ENCODE measurements at regions of chr19 and their contacts with region 1.

Region 1: GRCh38 chr19:17496337-17496997 is 15.0 kb upstream of the PGLS start:
- DNase-seq: peak; percentile 90
- CTCF ChIP-seq: peak; percentile 96

Region 2: GRCh38 chr19:17460372-17461230 is 35.9 kb before region 1 on chr19 and contains the start of gene NXNL1:
- CTCF ChIA-PET with region 1: interaction called, 31 read pairs
- POLR2A ChIA-PET with region 1: no interaction called
- DNase-seq: no peak
- CTCF ChIP-seq: no peak

Region 3: DNA sequence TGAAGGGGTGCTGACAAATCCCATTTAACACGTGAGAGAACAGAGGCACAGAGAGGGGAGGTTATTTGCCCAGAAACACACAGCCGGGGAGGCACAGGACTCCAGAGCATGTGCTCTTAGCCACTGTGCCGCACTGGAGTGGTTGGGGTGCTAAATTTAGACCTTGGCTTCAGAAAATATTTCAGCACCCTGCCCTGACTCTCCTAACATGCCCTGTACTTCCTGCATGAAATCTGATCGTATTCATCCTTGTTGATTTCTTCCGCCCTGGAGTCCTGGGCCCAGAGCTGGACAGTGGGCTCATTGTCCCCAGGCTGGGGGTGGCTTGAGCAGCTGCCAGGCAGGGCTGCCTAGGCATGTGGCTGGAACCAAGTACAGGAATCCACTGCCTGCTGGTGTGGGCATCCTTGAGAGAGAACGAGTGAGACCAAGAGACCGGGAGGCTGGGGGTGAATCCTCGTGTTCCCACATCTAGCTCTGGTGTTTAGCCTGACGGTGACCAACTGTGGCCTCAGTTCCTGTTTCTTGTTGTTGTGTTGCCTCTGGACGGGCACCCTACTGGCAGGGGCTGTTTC is 20.8 kb before region 1 on chr19:
- CTCF ChIA-PET with region 1: interaction called, 18 read pairs
- POLR2A ChIA-PET with region 1: no interaction called
- DNase-seq: no peak
- CTCF ChIP-seq: no peak

Region 4: GRCh38 chr19:17522988-17523872 is 26.8 kb after region 1 on chr19:
- CTCF ChIA-PET with region 1: interaction called, 28 read pairs
- POLR2A ChIA-PET with region 1: no interaction called
- DNase-seq: peak; percentile 87
- CTCF ChIP-seq: no peak

Region 5: GRCh38 chr19:17579661-17580244 is 83.3 kb after region 1 on chr19:
- CTCF ChIA-PET with region 1: interaction called, 58 read pairs
- POLR2A ChIA-PET with region 1: no interaction called
- DNase-seq: peak; percentile 83
- CTCF ChIP-seq: no peak

Region 6: GRCh38 chr19:17623224-17623935 is 126.9 kb after region 1 on chr19:
- CTCF ChIA-PET with region 1: interaction called, 12 read pairs
- POLR2A ChIA-PET with region 1: no interaction called
- DNase-seq: no peak
- CTCF ChIP-seq: no peak

Measured in GM10248 (cell line).